ENCODE measurements at regions of chr16 and their contacts with region 1.

Region 1: DNA sequence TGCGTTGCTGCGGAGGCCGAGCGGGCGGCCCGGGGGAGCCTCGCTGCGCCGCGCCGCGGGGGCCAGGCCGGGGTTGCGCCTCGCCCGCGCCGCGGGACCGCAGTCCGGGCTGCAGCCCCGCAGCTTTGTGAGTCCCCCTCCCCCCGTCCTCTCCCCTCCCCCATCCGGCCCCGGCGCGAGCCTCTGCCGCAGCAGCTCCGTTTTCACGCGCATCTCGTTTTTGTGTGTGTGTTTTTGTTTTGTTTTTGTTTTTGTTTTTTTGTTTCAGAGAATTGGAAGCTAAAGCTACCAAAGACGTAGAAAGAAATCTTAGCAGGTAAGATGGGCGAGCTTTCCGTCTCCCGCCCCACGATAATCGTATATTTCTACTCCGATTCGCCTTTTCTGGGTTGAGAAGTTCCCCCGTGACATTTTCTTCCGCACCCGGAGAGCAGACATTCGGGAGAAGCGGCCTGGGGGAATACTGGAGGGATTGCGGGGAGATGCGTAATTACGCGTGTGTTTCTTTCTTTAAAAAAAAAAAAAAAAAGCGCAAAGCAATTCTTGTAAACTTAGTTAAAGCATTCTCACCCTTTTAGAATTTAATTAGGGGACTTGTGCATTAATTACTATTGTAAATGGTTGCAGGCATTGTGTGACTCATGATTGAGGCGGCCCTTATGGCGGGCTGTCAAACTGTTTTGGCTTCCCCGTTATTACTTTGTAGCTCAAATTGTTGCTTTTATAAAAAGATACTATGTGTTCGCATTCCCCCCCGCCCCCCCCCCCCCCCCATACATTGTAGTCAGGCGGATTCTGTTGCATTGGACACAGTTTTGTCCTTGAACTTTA is 749 bp downstream of the TNRC6A start:
- DNase-seq: no peak

Region 2: GRCh38 chr16:24539850-24540601 is 190.2 kb before region 1 on chr16:
- intact Hi-C with region 1: loop called (anchors 2 kb)
- DNase-seq: peak; percentile 81

Region 3: DNA sequence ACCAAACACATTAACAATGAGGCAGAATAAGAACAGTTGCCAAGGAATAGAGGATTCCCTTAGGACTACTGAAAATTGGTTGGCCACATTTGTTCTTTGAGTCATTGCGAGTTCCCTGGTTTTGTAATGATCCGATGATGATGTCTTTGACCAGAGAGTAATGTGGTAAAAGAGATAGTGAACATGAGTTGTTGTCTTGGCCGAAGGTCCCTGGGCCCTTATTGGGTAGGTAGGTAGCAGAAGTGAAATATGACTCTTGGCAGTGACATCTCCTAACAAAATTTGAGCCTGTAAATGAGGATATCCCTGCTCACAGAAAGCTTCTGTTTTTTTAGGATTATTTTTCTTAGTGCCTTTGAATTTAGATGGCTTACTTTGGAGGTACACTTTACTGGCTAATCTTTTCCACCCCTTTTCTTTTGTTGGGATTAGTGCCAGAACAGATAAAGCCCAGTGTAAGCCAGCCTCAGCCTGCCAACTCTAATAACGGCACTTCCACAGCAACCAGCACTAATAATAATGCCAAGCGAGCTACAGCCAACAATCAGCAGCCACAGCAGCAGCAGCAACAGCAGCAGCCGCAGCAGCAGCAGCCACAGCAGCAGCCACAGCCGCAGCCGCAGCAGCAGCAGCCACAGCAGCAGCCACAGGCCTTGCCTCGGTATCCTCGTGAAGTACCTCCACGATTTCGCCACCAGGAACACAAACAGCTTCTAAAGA is 46.5 kb after region 1 on chr16:
- intact Hi-C with region 1: loop called (anchors 5 kb)
- DNase-seq: peak; percentile 77

Measured in cardiac septum (tissue), 1 donor.